PC-9 (cell line): ENCODE measurements at regions of chr1 and their contacts with region 1.

Region 1: DNA sequence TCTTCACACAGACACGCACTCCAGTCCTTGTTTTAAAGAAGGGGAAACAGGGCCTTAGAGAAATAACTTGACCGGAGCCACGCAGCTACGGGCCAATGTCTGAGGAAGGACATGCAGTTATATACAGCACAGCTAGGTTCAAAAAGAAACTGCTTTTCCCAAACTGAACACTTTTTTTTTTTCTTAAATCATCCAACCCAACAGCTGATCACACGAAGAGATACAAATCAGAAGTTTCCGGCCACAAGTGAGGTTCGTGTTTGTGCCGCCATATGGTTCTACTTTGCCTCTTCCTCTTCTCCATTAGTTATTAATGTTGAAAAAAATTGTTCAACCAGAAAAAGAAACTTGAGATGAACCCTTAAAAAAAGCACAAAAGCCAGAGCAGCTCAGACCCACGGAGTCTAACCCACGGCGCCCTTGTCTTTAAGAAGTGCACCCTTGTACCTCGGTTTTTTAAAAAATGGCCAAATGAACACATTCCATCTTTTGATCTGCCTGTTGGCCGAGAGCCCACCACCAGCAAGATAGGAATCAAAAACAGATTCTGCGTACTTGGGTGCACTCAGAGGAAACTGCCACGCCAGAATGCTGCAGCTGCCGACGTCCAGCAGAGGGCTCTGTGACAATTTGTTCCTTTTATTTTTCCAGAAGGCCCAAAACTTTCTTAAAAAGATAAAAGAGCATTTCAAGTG is 78.9 kb downstream of the SLC66A1 start:
- DNase-seq: no peak
- H3K4me3 ChIP-seq: no peak overlapping the region
- H3K27ac ChIP-seq: no peak overlapping the region
- H3K4me1 ChIP-seq: no peaks in the 10 kb centered on the region
- H3K27me3 ChIP-seq: no peaks in the 10 kb centered on the region
- CTCF ChIP-seq: peak; percentile 68

Region 2: GRCh38 chr1:19533626-19534025 is 142.6 kb after region 1 on chr1:
- CTCF ChIA-PET with region 1: no interaction called
- POLR2A ChIA-PET with region 1: no interaction called
- intact Hi-C with region 1: no loop called
- DNase-seq: no peak
- H3K4me3 ChIP-seq: no peak overlapping the region
- H3K27ac ChIP-seq: no peak overlapping the region
- H3K4me1 ChIP-seq: no peaks in the 10 kb centered on the region
- H3K27me3 ChIP-seq: no peaks in the 10 kb centered on the region
- CTCF ChIP-seq: no peak

Region 3: DNA sequence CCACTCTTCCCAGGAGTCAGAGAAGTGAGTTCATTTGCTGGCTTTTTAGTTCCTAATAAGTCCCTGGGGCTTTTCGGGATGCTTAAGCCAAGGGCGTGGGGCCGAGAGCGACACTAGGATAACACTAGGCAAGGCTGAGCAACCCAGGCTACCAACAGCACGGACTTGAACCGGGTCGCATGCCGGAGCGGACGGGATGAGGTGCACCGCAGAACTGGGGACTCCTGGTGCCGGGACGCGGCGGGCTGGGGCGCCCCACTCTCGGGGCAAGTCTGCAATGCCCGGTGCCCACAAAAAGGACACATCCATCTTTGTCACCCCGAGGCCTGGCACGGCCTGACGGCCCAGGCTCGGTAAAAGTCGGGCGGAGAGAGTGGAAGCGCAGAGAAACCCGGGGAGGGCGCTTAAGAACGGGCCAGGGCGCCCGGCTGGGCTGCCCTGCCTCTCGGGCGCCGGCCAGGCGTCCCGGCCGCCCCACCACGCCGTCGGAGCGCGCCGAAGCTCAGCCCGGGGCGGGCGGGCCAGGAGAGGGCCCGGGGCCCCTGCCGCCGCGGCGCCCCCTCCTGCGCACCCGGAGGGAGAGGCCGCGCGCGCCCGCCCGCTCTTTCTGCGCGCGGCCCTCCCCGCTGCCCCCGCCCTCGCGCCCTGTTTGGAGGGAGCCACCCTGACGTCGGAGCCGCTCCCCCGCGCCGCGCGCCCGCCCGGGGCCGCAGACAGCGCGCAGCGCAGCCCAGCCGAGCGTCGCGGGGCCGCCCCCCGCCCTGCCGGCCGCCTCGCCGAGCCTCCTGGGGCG is 252.8 kb after region 1 on chr1 and contains the start of gene NBL1:
- CTCF ChIA-PET with region 1: interaction called, 4 read pairs
- POLR2A ChIA-PET with region 1: no interaction called
- intact Hi-C with region 1: loop called (anchors 5 kb)
- DNase-seq: peak in 1 of 2 experiments; percentile 45
- H3K4me3 ChIP-seq: peak within 1 kb of the TSS; percentile 66
- H3K27ac ChIP-seq: no peak within 1 kb of the TSS
- H3K4me1 ChIP-seq: peaks cover 35% of the 10 kb centered on the region
- H3K27me3 ChIP-seq: no peaks in the 10 kb centered on the region
- CTCF ChIP-seq: no peak
- total RNA-seq, gene NBL1: 32.5 and 36.9 TPM in 2 replicates

Region 4: DNA sequence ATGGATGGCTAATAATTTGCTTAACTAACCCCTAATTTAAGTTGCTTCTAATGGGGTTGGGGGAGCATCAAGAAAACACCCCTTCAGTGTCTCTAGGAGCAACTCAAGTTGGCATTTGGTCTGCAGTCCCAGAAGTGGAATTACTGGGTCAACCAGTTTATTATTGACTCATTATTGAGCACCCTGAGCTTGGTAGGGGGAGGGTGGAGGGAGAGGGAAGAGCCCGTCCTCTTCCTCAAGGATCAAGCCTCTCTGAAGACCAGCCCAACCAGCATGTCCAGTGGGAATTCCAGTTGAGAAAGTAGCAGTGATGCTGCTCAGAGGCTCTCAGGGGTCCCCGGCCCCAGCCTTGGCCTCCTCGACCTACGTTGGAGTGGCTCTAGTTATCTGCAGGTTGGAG is 746.0 kb after region 1 on chr1:
- CTCF ChIA-PET with region 1: no interaction called
- POLR2A ChIA-PET with region 1: no interaction called
- intact Hi-C with region 1: no loop called
- DNase-seq: peak; percentile 65 to 89
- H3K4me3 ChIP-seq: no peak overlapping the region
- H3K27ac ChIP-seq: peak overlapping the region; percentile 61
- H3K4me1 ChIP-seq: peaks cover 50% of the 10 kb centered on the region
- H3K27me3 ChIP-seq: no peaks in the 10 kb centered on the region
- CTCF ChIP-seq: no peak